ENCODE measurements at regions of chr6 and their contacts with region 1.

Region 1: DNA sequence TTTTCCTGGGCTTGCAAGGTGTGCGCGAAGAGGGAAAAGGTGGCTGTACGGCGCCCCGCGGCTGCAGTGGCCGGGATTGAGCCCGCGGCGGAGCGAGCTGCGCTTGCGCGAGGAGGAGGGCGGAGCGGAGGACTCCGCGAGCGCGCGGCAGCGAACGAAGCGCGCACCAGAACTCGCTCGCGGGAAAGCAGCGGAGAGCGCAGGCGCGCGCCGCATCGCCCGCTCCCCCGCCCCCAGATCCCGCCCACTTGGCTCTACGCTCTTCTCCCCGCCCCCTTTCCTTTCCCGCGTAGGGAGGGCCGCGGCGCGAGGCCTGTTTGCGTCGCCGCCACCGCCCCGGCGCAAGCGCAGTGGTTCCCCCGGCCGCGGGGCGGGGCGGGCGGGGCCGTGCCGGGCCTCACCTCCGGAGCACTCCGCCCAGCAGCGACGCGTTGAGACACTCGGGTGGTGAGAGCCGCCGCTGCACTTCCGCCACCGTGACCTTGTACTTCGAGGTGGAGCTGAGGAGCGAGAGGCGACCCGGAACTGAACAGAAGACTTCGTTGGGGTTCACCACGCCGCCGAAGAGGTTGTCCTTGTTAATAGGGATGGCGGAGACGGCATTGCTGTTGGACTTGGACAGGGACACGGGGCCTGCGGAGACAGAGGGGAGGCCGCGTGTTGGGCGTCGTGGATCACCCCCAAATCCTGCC is 10.6 kb downstream of the TFAP2A start:
- DNase-seq: peak; percentile 97
- H3K4me3 ChIP-seq: peak overlapping the region; percentile 51 to 97 (median 74)
- H3K27ac ChIP-seq: peak overlapping the region; percentile 99
- H3K4me1 ChIP-seq: peaks cover 79% of the 10 kb centered on the region
- H3K27me3 ChIP-seq: no peaks in the 10 kb centered on the region
- CTCF ChIP-seq: peak; percentile 4 to 50

Region 2: DNA sequence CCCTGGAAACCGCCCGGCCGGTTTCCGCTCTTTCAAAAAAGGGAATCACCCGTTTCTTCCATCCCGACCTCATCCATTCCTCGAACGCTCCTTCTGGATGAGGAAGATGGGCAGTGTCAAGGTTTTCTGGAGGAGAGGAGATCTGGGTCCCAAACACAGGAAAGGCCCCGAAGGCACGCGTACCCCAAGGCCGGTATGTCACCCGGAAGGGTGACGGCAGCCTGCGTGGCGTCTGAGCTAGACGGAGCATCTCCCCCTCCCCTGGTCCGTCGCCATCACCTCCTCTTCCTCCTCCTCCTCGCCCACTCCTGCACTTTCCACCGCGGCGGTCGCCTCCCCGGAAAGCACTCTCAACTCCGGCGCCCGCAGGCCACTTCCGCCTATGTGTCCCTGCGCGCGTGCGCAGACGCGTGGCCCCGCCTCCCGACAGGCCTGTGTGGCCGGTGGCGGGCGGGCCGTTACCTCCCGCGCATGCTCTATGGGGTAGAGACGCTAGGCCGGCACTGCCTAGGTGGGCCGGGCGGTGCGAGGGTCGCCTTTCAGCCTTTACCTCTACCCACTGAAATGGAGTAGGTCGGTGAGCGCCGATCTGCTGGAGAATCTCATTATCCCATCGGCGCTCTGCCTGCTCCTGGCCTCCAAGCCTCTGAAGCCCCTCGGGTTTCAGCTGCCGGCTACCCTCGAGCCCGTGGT is 1968.9 kb before region 1 on chr6 and contains the start of gene SLC35B3:
- CTCF ChIA-PET with region 1: no interaction called
- dilution Hi-C with region 1: no loop called
- in situ Hi-C with region 1: loop called in 1 of 2 experiments (anchors 25 kb)
- intact Hi-C with region 1: no loop called
- DNase-seq: peak; percentile 88
- H3K4me3 ChIP-seq: peak within 1 kb of the TSS; percentile 58 to 90 (median 83)
- H3K27ac ChIP-seq: peak within 1 kb of the TSS; percentile 87
- H3K4me1 ChIP-seq: peaks cover 17% of the 10 kb centered on the region
- H3K27me3 ChIP-seq: no peaks in the 10 kb centered on the region
- CTCF ChIP-seq: no peak
- total RNA-seq, gene SLC35B3: 13.0 to 17.6 TPM

Region 3: GRCh38 chr6:9851541-9852380 is 552.5 kb before region 1 on chr6:
- CTCF ChIA-PET with region 1: no interaction called
- dilution Hi-C with region 1: no loop called
- in situ Hi-C with region 1: loop called in 1 of 2 experiments (anchors 25 kb)
- intact Hi-C with region 1: no loop called
- DNase-seq: peak; percentile 76
- H3K4me3 ChIP-seq: no peak overlapping the region
- H3K27ac ChIP-seq: peak overlapping the region; percentile 20
- H3K4me1 ChIP-seq: peaks cover 9% of the 10 kb centered on the region
- H3K27me3 ChIP-seq: no peaks in the 10 kb centered on the region
- CTCF ChIP-seq: peak; percentile 66 to 69

Region 4: GRCh38 chr6:10163200-10163962 is 240.9 kb before region 1 on chr6:
- CTCF ChIA-PET with region 1: no interaction called
- dilution Hi-C with region 1: no loop called
- in situ Hi-C with region 1: no loop called
- intact Hi-C with region 1: loop called (anchors 1 kb)
- DNase-seq: peak; percentile 98
- H3K4me3 ChIP-seq: peak overlapping the region; percentile 43 to 59 (median 47)
- H3K27ac ChIP-seq: peak overlapping the region; percentile 93
- H3K4me1 ChIP-seq: peaks cover 21% of the 10 kb centered on the region
- H3K27me3 ChIP-seq: no peaks in the 10 kb centered on the region
- CTCF ChIP-seq: no peak

Region 5: GRCh38 chr6:10248378-10248891 is 155.8 kb before region 1 on chr6:
- CTCF ChIA-PET with region 1: no interaction called
- dilution Hi-C with region 1: no loop called
- in situ Hi-C with region 1: no loop called
- intact Hi-C with region 1: loop called (anchors 5 kb)
- DNase-seq: peak; percentile 53
- H3K4me3 ChIP-seq: no peak overlapping the region
- H3K27ac ChIP-seq: no peak overlapping the region
- H3K4me1 ChIP-seq: peaks cover 10% of the 10 kb centered on the region
- H3K27me3 ChIP-seq: no peaks in the 10 kb centered on the region
- CTCF ChIP-seq: peak; percentile 15 to 35